ENCODE measurements at regions of chr7 and their contacts with region 1.

Region 1: GRCh38 chr7:4681886-4682620 is at the start of gene FOXK1:
- DNase-seq: peak; percentile 67
- H3K4me3 ChIP-seq: peak within 1 kb of the TSS; percentile 65
- H3K27ac ChIP-seq: peak within 1 kb of the TSS; percentile 83
- H3K4me1 ChIP-seq: peaks cover 6% of the 10 kb centered on the region
- H3K27me3 ChIP-seq: no peaks in the 10 kb centered on the region
- CTCF ChIP-seq: no peak
- total RNA-seq, gene FOXK1: 29.6 to 30.8 TPM

Region 2: DNA sequence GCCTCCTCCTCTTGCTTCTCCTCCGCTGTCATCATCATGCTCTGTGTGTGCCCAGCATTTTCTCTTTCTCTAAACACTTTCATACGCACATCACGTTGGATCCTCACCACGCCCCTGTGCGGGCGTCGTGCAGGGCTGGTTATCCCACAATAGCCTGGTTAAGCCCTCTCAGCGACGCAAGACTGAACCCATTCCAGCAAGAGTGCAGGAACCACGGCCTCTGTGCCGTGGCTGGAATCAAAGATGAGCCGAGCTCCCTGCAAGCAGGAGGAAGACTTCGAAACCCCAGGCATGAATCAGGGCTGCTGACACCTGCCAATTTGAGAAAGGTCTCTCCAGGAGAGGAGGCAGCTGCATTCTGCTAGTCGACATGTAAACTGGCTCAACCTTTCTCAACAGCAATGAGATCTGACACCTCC is 74.7 kb before region 1 on chr7:
- intact Hi-C with region 1: no loop called
- DNase-seq: no peak
- H3K4me3 ChIP-seq: no peak overlapping the region
- H3K27ac ChIP-seq: no peak overlapping the region
- H3K4me1 ChIP-seq: no peaks in the 10 kb centered on the region
- H3K27me3 ChIP-seq: no peaks in the 10 kb centered on the region
- CTCF ChIP-seq: no peak

Region 3: GRCh38 chr7:4641667-4642467 is 40.2 kb before region 1 on chr7:
- intact Hi-C with region 1: loop called (anchors 2 kb)
- DNase-seq: peak; percentile 92
- H3K4me3 ChIP-seq: peak overlapping the region; percentile 60
- H3K27ac ChIP-seq: peak overlapping the region; percentile 77
- H3K4me1 ChIP-seq: no peaks in the 10 kb centered on the region
- H3K27me3 ChIP-seq: no peaks in the 10 kb centered on the region
- CTCF ChIP-seq: no peak

Region 4: GRCh38 chr7:4753711-4754432 is 71.8 kb after region 1 on chr7:
- intact Hi-C with region 1: loop called (anchors 5 kb)
- DNase-seq: peak; percentile 90
- H3K4me3 ChIP-seq: no peak overlapping the region
- H3K27ac ChIP-seq: no peak overlapping the region
- H3K4me1 ChIP-seq: no peaks in the 10 kb centered on the region
- H3K27me3 ChIP-seq: no peaks in the 10 kb centered on the region
- CTCF ChIP-seq: peak; percentile 86